Activated B cell treated with CpG ODN at 0.5 μM for 24 hours (primary cell): ENCODE measurements at regions of chr2 and their contacts with region 1.

Region 1: DNA sequence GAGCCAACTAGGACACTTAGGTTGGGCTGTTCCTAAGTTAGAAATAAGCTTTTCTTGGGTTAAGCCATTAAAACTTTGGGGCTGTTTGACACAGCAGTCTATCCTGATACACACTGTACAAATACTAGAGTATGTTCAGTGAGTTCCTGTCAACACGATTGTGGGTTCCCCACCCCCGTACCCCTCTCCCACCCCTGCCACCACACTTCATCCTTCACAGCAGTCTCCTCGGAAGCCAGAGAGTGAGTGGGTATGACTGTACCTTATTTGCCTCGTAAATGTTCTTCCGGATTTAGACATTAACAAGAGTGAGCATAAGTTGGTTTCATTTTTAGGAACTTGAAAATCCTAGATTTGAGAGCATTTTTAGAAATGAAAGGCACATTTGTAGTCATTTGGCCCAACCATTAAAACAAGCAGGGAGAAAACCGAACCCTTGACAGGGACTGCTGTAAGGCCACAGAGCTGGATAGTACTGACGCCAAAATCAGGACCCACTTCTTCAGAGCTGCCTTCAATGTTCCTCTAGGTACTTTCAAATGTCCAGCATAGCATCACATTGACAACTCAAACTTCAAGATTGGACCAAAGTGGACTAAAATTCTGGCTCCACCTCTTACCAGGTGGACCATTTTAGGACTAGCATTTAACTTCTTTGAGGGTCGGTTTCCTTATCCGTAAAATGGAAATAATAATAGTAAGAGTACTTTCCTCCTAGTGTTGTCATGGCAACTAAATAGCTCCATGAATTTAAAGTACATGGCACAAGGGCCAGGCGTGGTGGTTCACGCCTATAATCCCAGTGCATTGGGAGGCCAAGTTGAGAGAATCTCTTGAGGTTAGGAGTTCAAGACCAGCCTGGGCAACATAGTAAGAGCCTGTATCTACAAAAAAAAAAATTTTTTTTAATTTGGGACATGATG is 166.3 kb upstream of the SERTAD2 start:
- DNase-seq: no peak
- ATAC-seq: peak; percentile 94
- H3K4me3 Mint-ChIP-seq: peak overlapping the region; percentile 59
- H3K27ac Mint-ChIP-seq: peak overlapping the region; percentile 89
- H3K4me1 Mint-ChIP-seq: peaks cover 50% of the 10 kb centered on the region
- H3K27me3 Mint-ChIP-seq: no peaks in the 10 kb centered on the region
- CTCF ChIP-seq: no peak

Region 2: DNA sequence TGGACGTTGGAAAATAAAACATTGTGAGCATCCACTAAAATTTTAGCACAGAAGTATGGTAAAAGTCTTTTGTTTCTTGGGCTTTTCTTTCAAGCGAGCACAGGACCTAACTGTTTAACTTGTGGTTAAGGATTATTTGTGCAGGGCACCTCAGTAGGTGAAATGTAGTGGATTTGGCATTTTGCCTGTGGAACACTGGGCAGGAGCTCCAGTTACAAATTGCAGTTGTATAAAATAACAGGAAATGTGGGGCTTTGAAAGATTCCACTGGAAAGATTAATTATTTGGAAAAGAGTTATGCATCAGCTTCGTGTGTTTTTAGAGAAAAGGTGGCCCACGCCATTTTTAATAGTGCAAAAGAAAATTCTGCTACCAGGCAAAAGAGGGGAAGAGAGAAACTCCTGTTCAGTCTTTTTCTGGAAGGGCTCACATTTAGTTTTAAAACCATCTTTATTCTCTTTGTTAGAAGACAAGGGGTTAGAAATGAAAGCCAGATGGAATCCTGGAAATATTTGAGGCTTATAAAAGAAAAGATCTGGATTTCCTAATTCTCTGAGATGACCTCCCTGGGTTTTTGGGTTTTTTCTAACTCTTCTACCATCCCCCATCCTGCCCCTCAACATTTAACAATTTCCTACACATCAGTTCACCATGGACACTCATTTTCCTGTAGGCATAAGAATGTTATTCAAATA is 22.0 kb before region 1 on chr2:
- CTCF ChIA-PET with region 1: interaction called, 3 read pairs
- POLR2A ChIA-PET with region 1: interaction called, 12 read pairs
- intact Hi-C with region 1: no loop called
- DNase-seq: no peak
- ATAC-seq: no peak
- H3K4me3 Mint-ChIP-seq: no peak overlapping the region
- H3K27ac Mint-ChIP-seq: no peak overlapping the region
- H3K4me1 Mint-ChIP-seq: peaks cover 7% of the 10 kb centered on the region
- H3K27me3 Mint-ChIP-seq: no peaks in the 10 kb centered on the region
- CTCF ChIP-seq: no peak

Region 3: DNA sequence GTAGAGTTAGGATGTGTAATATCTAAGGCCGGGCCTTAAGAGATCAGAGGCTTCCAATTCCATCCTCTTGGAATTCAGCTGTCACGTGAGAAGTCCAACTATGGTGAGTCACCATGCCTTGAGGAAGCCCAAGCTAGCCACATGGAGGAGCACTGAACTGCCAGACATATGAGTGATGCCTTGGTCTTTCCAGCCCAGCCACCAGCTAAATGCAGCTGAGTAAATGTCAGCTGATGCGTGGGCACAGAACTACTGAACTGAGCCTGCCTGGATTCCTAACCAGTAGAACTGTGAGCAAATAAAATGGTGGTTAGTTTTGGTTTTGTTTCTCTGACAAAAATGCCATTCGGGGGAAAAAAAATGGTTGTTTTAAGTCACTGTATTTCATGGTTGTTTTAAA is 12.6 kb before region 1 on chr2:
- CTCF ChIA-PET with region 1: no interaction called
- POLR2A ChIA-PET with region 1: interaction called, 4 read pairs
- intact Hi-C with region 1: loop called (anchors 1 kb)
- DNase-seq: no peak
- ATAC-seq: peak; percentile 47
- H3K4me3 Mint-ChIP-seq: no peak overlapping the region
- H3K27ac Mint-ChIP-seq: no peak overlapping the region
- H3K4me1 Mint-ChIP-seq: peaks cover 14% of the 10 kb centered on the region
- H3K27me3 Mint-ChIP-seq: no peaks in the 10 kb centered on the region
- CTCF ChIP-seq: no peak

Region 4: GRCh38 chr2:64831134-64831976 is 11.3 kb after region 1 on chr2:
- CTCF ChIA-PET with region 1: no interaction called
- POLR2A ChIA-PET with region 1: interaction called, 3 read pairs
- intact Hi-C with region 1: loop called (anchors 1 kb)
- DNase-seq: peak; percentile 75
- ATAC-seq: peak; percentile 96
- H3K4me3 Mint-ChIP-seq: peak overlapping the region; percentile 63
- H3K27ac Mint-ChIP-seq: peak overlapping the region; percentile 82
- H3K4me1 Mint-ChIP-seq: peaks cover 21% of the 10 kb centered on the region
- H3K27me3 Mint-ChIP-seq: no peaks in the 10 kb centered on the region
- CTCF ChIP-seq: no peak